AG04449 (cell line): ENCODE measurements at regions of chr1 and their contacts with region 1.

Region 1: GRCh38 chr1:165686121-165686970 is 12.0 kb downstream of the ALDH9A1 start:
- DNase-seq: no peak
- H3K4me3 ChIP-seq: no peak overlapping the region
- CTCF ChIP-seq: no peak

Region 2: DNA sequence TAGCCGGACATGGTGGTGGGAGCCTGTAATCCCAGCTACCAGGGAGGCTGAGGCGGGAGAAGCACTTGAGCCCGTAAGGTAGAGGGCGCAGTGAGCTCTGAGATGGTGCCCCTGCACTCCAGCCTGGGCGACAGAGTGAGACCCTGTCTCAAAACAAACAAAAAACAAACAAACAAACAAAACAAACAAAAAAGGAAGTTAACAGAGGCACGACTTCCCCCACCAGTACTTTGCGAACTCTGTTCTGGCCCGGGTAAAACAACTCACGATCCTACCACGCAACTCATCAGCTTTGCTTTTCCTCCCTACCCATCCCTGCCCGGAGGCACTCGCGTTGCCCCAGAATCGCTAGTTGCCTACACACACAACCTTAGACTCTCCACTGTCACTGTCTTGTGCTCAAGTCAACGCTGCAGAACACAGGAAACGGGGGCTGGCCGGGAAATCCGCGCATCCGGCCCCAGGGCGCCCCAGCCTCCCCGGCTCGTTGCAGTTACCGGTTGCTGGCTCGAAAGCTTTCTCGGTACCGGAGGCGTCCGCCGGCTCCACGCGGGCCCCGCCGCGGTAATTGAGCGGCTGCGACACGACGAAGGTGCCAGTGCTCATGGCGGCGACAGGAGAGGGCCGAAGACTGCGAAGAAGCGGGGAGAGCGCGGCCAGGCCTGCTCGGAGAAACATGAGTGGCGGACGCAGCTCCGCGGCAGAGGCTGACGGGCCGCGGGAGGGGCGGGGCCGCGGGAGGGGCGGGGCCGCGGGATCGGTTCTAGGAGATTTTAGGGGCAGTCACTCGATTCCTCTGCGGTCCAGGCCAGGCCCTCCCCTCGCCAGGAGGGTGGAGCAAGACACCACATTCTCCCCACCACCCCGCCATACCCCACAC is 11.8 kb after region 1 on chr1 and contains the start of gene ALDH9A1:
- CTCF ChIA-PET with region 1: interaction called, 12 read pairs
- POLR2A ChIA-PET with region 1: no interaction called
- DNase-seq: peak; percentile 26
- H3K4me3 ChIP-seq: peak within 1 kb of the TSS; percentile 81
- CTCF ChIP-seq: peak; percentile 33